CD4-positive, alpha-beta memory T cell (primary cell): ENCODE measurements at regions of chr11 and their contacts with region 1.

Region 1: GRCh38 chr11:33736148-33736809 is at the start of gene CD59:
- DNase-seq: peak; percentile 82 to 89 (median 83)
- H3K4me3 ChIP-seq: peak within 1 kb of the TSS; percentile 76 to 91
- H3K4me3 Mint-ChIP-seq: peak within 1 kb of the TSS; percentile 88 to 96 (median 92)
- H3K27ac ChIP-seq: peak within 1 kb of the TSS; percentile 75
- H3K27ac Mint-ChIP-seq: peak within 1 kb of the TSS; percentile 78 to 94 (median 90)
- H3K4me1 ChIP-seq: peaks cover 30% of the 10 kb centered on the region
- H3K4me1 Mint-ChIP-seq: peaks cover 25 to 44% (median 37%) of the 10 kb centered on the region in 4 donors
- H3K27me3 ChIP-seq: no peaks in the 10 kb centered on the region
- H3K27me3 Mint-ChIP-seq: no peaks in the 10 kb centered on the region
- total RNA-seq, gene CD59: 95.8 to 100 TPM

Region 2: GRCh38 chr11:33700425-33701271 is 35.6 kb before region 1 on chr11 and contains the start of gene C11orf91:
- CTCF ChIA-PET with region 1: interaction called, 5 read pairs
- POLR2A ChIA-PET with region 1: interaction called, 33 read pairs
- intact Hi-C with region 1: loop called (anchors 1 kb)
- DNase-seq: peak; percentile 89 to 95 (median 94)
- H3K4me3 ChIP-seq: peak within 1 kb of the TSS; percentile 7 to 53
- H3K4me3 Mint-ChIP-seq: peak within 1 kb of the TSS; percentile 89 to 96 (median 92)
- H3K27ac ChIP-seq: peak within 1 kb of the TSS; percentile 29
- H3K27ac Mint-ChIP-seq: peak within 1 kb of the TSS; percentile 78 to 93 (median 88)
- H3K4me1 ChIP-seq: peaks cover 15% of the 10 kb centered on the region
- H3K4me1 Mint-ChIP-seq: peaks cover 11 to 22% (median 19%) of the 10 kb centered on the region in 4 donors
- H3K27me3 ChIP-seq: no peaks in the 10 kb centered on the region
- H3K27me3 Mint-ChIP-seq: peaks cover 5 to 13% of the 10 kb centered on the region in 2 donors
- total RNA-seq, gene C11orf91: 0.49 TPM in 1 of 2 experiments, not detected in the other

Region 3: DNA sequence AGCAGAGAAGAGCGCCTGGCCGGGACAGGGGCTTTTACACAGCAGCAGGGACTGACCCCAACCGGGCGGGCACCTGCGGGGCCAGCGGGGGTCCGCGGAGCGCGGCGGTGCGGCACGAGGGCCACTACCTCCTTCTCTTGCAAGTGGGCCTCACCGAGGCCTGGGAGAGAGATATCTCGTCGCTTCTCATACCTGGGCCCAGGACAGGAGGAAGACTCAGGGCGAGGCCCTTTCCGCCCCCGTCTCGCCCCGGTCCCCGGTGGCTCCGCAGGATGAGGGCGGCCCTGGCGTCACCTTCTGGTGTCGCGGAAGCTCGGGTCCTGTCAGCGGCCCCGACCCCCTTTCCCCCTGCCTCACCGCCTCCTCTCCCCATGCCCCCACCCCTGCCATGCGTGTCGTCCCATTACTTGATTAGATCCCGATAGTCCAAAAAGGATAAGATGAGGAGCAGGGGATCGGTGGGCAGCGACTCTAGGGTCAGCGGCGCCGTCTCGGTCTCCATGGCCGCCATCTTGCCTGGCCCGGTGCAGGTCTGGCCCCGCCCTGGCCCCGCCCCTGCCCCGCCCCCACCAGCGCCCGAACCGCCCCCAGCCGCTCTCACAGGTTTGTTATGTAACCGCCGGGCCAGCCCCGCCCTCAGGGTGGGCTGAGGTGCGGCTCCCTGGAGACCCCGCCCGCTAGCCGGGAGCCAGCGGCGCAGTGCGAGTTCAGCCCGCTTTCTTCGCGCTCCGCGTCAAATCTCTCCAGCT is 37.9 kb after region 1 on chr11 and contains the start of gene FBXO3:
- CTCF ChIA-PET with region 1: no interaction called
- POLR2A ChIA-PET with region 1: interaction called, 24 read pairs
- intact Hi-C with region 1: loop called (anchors 1 kb)
- DNase-seq: peak; percentile 88 to 89 (median 89)
- H3K4me3 ChIP-seq: peak within 1 kb of the TSS; percentile 85 to 90
- H3K4me3 Mint-ChIP-seq: peak within 1 kb of the TSS; percentile 93 to 99 (median 96)
- H3K27ac ChIP-seq: peak within 1 kb of the TSS; percentile 79
- H3K27ac Mint-ChIP-seq: peak within 1 kb of the TSS; percentile 94 to 99 (median 99)
- H3K4me1 ChIP-seq: peaks cover 42% of the 10 kb centered on the region
- H3K4me1 Mint-ChIP-seq: peaks cover 31 to 64% (median 49%) of the 10 kb centered on the region in 4 donors
- H3K27me3 ChIP-seq: no peaks in the 10 kb centered on the region
- H3K27me3 Mint-ChIP-seq: peaks cover 0 to 3% of the 10 kb centered on the region in 2 donors
- total RNA-seq, gene FBXO3: 55.1 to 55.6 TPM

Region 4: GRCh38 chr11:34245041-34245440 is 508.8 kb after region 1 on chr11:
- CTCF ChIA-PET with region 1: no interaction called
- POLR2A ChIA-PET with region 1: no interaction called
- intact Hi-C with region 1: loop called (anchors 5 kb)
- DNase-seq: no peak
- H3K4me3 ChIP-seq: no peak overlapping the region
- H3K4me3 Mint-ChIP-seq: no peak overlapping the region
- H3K27ac ChIP-seq: no peak overlapping the region
- H3K27ac Mint-ChIP-seq: peak overlapping the region in 2 of 7 donors; percentile 10 to 23
- H3K4me1 ChIP-seq: peaks cover 30% of the 10 kb centered on the region
- H3K4me1 Mint-ChIP-seq: peaks cover 24 to 49% (median 34%) of the 10 kb centered on the region in 4 donors
- H3K27me3 ChIP-seq: no peaks in the 10 kb centered on the region
- H3K27me3 Mint-ChIP-seq: peaks cover 0 to 3% of the 10 kb centered on the region in 2 donors